Heart left ventricle (tissue), 16 donors: ENCODE measurements at regions of chr17 and their contacts with region 1.

Region 1: GRCh38 chr17:71677439-71677838 is 443.4 kb upstream of the SOX9 start:
- DNase-seq: no peak
- ATAC-seq: no peak
- H3K4me3 ChIP-seq: no peak overlapping the region
- H3K27ac ChIP-seq: no peak overlapping the region
- H3K4me1 ChIP-seq: no peaks in the 10 kb centered on the region
- H3K27me3 ChIP-seq: no peaks in the 10 kb centered on the region
- CTCF ChIP-seq: no peak
- POLR2A ChIP-seq: no peak

Region 2: GRCh38 chr17:71730871-71731270 is 53.4 kb after region 1 on chr17:
- intact Hi-C with region 1: loop called in 1 of 10 experiments (anchors 10 kb)
- DNase-seq: no peak
- ATAC-seq: no peak
- H3K4me3 ChIP-seq: no peak overlapping the region
- H3K27ac ChIP-seq: no peak overlapping the region
- H3K4me1 ChIP-seq: no peaks in the 10 kb centered on the region
- H3K27me3 ChIP-seq: no peaks in the 10 kb centered on the region
- CTCF ChIP-seq: no peak
- POLR2A ChIP-seq: no peak